ENCODE measurements at regions of chr11 and their contacts with region 1.

Region 1: GRCh38 chr11:127843483-127844396 is 743.6 kb downstream of the ETS1 start:
- H3K4me3 ChIP-seq: no peak overlapping the region
- H3K27ac ChIP-seq: no peak overlapping the region
- H3K4me1 ChIP-seq: no peaks in the 10 kb centered on the region
- CTCF ChIP-seq: peak; percentile 21; the same call in 1 of the 2 replicates

Region 2: GRCh38 chr11:127564810-127565209 is 278.9 kb before region 1 on chr11:
- CTCF ChIA-PET with region 1: no interaction called
- POLR2A ChIA-PET with region 1: no interaction called
- H3K4me3 ChIP-seq: no peak overlapping the region
- H3K27ac ChIP-seq: no peak overlapping the region
- H3K4me1 ChIP-seq: no peaks in the 10 kb centered on the region
- CTCF ChIP-seq: no peak

Region 3: DNA sequence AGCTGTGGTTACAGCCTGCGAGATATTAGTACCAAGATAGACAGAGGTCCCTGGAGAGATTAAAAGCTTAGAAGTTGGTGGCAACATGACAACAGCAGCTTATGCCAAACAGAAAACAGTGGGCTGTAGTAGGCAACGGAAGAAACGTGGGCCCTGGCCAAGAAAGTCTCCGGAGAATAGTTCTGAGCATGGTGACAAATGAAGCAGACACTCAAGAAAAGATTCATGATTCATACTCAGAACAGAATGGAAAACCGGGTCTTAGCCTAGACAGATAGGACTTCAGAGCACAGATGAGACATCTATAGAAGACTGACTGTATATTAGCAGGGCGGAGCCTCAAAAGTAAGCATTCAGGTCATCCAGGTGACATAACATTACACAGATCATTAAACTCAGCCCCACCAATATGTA is 16.2 kb after region 1 on chr11:
- CTCF ChIA-PET with region 1: interaction called, 10 read pairs
- POLR2A ChIA-PET with region 1: no interaction called
- H3K4me3 ChIP-seq: no peak overlapping the region
- H3K27ac ChIP-seq: no peak overlapping the region
- H3K4me1 ChIP-seq: no peaks in the 10 kb centered on the region
- CTCF ChIP-seq: no peak

Measured in HEK293 (cell line).